ENCODE measurements at regions of chr17 and their contacts with region 1.

Region 1: GRCh38 chr17:18896146-18896545 is 38.2 kb downstream of the PRPSAP2 start:
- DNase-seq: no peak
- ATAC-seq: no peak
- H3K4me3 ChIP-seq: no peak overlapping the region
- H3K4me3 Mint-ChIP-seq: peak overlapping the region in 1 of 10 donors; percentile 46
- H3K27ac ChIP-seq: no peak overlapping the region
- H3K27ac Mint-ChIP-seq: no peak overlapping the region
- H3K4me1 ChIP-seq: peaks cover 6 to 15% of the 10 kb centered on the region in 2 donors
- H3K4me1 Mint-ChIP-seq: peaks cover 18 to 58% (median 50%) of the 10 kb centered on the region in 7 donors
- H3K27me3 ChIP-seq: no peaks in the 10 kb centered on the region
- H3K27me3 Mint-ChIP-seq: peaks cover 0 to 2% (median 0%) of the 10 kb centered on the region in 5 donors

Region 2: GRCh38 chr17:18877104-18877503 is 19.0 kb before region 1 on chr17:
- CTCF ChIA-PET with region 1: no interaction called
- POLR2A ChIA-PET with region 1: no interaction called
- intact Hi-C with region 1: loop called in 1 of 2 experiments (anchors 2 kb)
- DNase-seq: no peak
- ATAC-seq: no peak
- H3K4me3 ChIP-seq: no peak overlapping the region
- H3K4me3 Mint-ChIP-seq: no peak overlapping the region
- H3K27ac ChIP-seq: no peak overlapping the region
- H3K27ac Mint-ChIP-seq: peak overlapping the region in 3 of 9 donors; percentile 24 to 79 (median 33)
- H3K4me1 ChIP-seq: no peaks in the 10 kb centered on the region
- H3K4me1 Mint-ChIP-seq: peaks cover 0 to 13% (median 5%) of the 10 kb centered on the region in 7 donors
- H3K27me3 ChIP-seq: no peaks in the 10 kb centered on the region
- H3K27me3 Mint-ChIP-seq: no peaks in the 10 kb centered on the region

Region 3: DNA sequence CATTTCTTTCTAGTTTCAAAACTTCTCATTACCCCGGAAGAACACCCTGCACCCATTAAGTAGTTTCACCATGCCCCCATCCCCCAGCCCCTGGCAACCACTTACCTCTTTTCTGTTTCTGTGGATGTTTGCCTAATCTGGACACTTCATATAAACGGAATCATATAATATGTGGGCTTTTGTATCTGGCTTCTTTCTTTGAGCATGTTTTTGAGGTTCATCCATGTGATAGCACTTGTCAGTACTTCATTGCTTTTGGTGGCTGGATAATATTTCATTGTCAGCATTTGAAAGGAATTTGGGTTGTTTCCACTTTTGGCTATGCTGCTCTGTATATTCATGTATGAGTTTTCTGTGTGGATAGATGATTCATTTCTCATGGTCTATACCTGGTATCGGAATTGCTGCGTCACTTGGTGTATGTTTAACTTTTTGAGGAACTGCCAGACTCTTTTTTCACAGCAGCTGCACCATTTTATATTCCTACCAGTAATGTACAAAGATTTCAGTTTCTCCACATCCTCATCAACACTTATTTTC is 25.8 kb after region 1 on chr17:
- CTCF ChIA-PET with region 1: no interaction called
- POLR2A ChIA-PET with region 1: interaction called, 7 read pairs
- intact Hi-C with region 1: loop called (anchors 1 kb)
- DNase-seq: no peak
- ATAC-seq: no peak
- H3K4me3 ChIP-seq: no peak overlapping the region
- H3K4me3 Mint-ChIP-seq: peak overlapping the region in 8 of 10 donors; percentile 13 to 63 (median 50)
- H3K27ac ChIP-seq: no peak overlapping the region
- H3K27ac Mint-ChIP-seq: peak overlapping the region; percentile 20 to 70 (median 60)
- H3K4me1 ChIP-seq: peaks cover 9 to 58% of the 10 kb centered on the region in 2 donors
- H3K4me1 Mint-ChIP-seq: peaks cover 34 to 90% (median 74%) of the 10 kb centered on the region in 7 donors
- H3K27me3 ChIP-seq: no peaks in the 10 kb centered on the region
- H3K27me3 Mint-ChIP-seq: no peaks in the 10 kb centered on the region

Region 4: DNA sequence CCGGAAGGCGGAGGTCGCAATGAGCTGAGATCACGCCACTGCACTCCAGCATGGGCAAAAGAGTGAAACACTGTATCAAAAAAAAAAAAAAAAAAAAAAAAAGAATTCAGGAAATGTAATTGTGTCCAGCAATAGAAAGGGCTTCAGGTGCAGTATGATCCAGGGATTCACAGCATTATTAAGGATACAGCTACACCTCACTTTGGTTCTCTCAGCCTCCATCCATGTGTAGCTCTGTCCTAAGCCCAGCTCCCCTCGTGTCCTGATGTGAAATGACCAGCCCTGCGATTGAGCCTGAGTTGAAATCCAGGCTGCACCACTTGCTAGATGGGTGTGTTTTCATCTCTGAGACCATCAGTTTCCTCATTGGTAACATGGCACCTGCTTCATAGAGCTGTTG is 58.9 kb after region 1 on chr17:
- CTCF ChIA-PET with region 1: interaction called, 5 read pairs
- POLR2A ChIA-PET with region 1: interaction called, 6 read pairs
- intact Hi-C with region 1: loop called in 1 of 2 experiments (anchors 1 kb)
- DNase-seq: no peak
- ATAC-seq: no peak
- H3K4me3 ChIP-seq: peak overlapping the region; percentile 33
- H3K4me3 Mint-ChIP-seq: peak overlapping the region; percentile 52 to 93 (median 73)
- H3K27ac ChIP-seq: peak overlapping the region; percentile 62
- H3K27ac Mint-ChIP-seq: peak overlapping the region; percentile 81 to 98 (median 91)
- H3K4me1 ChIP-seq: peaks cover 16 to 34% of the 10 kb centered on the region in 2 donors
- H3K4me1 Mint-ChIP-seq: peaks cover 26 to 70% (median 55%) of the 10 kb centered on the region in 7 donors
- H3K27me3 ChIP-seq: no peaks in the 10 kb centered on the region
- H3K27me3 Mint-ChIP-seq: peaks cover 0 to 7% (median 0%) of the 10 kb centered on the region in 5 donors

Region 5: DNA sequence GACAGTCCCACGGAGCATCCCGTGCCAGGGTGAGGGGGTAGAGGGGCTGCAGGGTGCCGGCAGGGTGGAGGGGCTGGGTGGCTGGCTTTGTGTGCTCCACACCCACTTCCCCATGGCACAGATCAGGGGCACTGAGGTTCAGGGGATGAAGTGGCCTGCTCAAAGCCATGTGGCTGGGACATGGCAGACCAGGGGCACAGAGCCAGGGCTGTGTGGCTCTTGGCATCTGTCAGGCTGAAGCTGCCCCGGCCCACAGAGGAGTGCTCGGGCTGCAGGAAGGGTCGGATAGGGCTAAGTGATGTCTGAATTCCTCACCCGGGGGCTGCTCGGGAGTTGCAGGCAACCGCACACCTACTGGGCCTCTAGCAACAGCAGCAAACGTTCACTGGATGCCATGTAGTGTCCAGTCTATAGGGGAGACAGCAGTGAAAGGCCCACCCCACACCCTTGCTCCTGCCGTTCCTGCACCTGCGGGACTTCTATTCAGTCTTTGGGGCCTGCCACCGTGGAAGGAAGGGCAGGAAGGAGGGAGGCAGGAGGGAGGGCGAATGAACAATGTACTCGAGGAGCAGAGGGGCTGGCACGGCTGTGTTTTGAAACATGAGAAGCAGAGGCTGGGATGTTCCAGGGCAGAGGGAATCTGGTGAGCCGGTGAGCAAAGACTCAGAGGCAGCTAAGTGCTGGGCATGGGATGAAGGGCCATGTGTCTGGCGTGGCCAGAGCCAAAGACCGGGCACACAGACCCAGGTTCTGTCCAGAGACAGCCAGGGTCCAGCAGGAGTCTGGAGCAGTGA is 70.9 kb after region 1 on chr17:
- CTCF ChIA-PET with region 1: no interaction called
- POLR2A ChIA-PET with region 1: no interaction called
- intact Hi-C with region 1: no loop called
- DNase-seq: no peak
- ATAC-seq: no peak
- H3K4me3 ChIP-seq: no peak overlapping the region
- H3K4me3 Mint-ChIP-seq: no peak overlapping the region
- H3K27ac ChIP-seq: no peak overlapping the region
- H3K27ac Mint-ChIP-seq: peak overlapping the region in 1 of 9 donors; percentile 42
- H3K4me1 ChIP-seq: no peaks in the 10 kb centered on the region
- H3K4me1 Mint-ChIP-seq: peaks cover 0 to 18% (median 9%) of the 10 kb centered on the region in 7 donors
- H3K27me3 ChIP-seq: no peaks in the 10 kb centered on the region
- H3K27me3 Mint-ChIP-seq: no peaks in the 10 kb centered on the region

Region 6: GRCh38 chr17:20063665-20064648 is 1167.8 kb after region 1 on chr17:
- CTCF ChIA-PET with region 1: no interaction called
- POLR2A ChIA-PET with region 1: no interaction called
- intact Hi-C with region 1: no loop called
- DNase-seq: no peak
- ATAC-seq: peak; percentile 75
- H3K4me3 ChIP-seq: no peak overlapping the region
- H3K4me3 Mint-ChIP-seq: no peak overlapping the region
- H3K27ac ChIP-seq: no peak overlapping the region
- H3K27ac Mint-ChIP-seq: no peak overlapping the region
- H3K4me1 ChIP-seq: no peaks in the 10 kb centered on the region
- H3K4me1 Mint-ChIP-seq: peaks cover 0 to 7% (median 0%) of the 10 kb centered on the region in 7 donors
- H3K27me3 ChIP-seq: no peaks in the 10 kb centered on the region
- H3K27me3 Mint-ChIP-seq: peaks cover 0 to 4% (median 0%) of the 10 kb centered on the region in 5 donors